Heart left ventricle (tissue), 16 donors: ENCODE measurements at regions of chr19 and their contacts with region 1.

Region 1: DNA sequence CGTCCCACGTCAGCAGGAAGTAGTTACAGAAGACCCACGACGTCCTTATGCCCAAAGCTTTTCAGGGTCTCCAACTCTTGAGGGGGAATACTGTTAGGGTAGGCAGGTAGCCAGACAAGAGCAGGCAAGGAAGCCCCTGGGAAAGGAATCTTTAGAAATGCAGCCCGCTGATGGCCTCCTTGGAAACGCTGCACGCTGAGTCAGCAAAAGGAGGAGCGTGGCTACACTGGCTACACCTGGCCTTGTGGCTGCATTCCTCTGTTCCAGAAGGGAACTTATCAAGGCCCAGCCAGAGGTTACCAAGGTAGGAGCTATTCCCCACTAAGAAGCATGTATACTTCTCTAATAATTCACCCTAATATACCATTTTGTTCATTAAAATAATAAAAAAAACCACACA is 2.0 kb downstream of the ERVV-1 start:
- DNase-seq: no peak
- ATAC-seq: no peak
- H3K4me3 ChIP-seq: no peak overlapping the region
- H3K27ac ChIP-seq: no peak overlapping the region
- H3K4me1 ChIP-seq: no peaks in the 10 kb centered on the region
- H3K27me3 ChIP-seq: peaks cover 0 to 12% (median 0%) of the 10 kb centered on the region in 9 donors
- CTCF ChIP-seq: no peak
- POLR2A ChIP-seq: no peak

Region 2: DNA sequence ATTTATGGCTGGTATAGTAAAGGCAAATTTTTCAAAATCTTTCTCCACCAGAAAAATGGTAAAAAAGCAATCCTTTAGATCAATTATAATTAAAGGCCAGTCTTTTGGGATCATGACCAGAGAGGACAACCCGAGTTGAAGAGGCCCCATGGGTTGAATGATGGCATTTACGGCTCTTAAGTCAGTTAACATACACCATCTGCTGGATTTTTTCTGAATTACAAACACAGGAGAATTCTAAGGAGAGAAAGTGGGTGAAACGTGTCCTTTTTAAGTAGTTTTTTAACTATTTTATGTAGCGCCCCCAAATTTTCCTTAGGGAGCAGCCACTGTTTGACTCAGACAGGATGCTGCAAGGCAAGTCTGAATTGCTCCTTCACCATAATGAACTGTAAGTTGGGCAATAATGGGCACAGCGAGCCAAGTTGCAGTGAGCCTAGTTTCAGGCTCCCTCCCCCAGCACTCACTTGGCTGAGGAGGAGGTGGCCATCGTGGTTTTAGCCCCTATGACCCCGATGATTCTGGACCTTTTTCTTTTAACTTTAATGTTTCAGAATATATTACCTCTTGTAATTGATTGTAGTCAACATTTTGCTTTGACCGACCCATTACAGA is 267.3 kb before region 1 on chr19:
- intact Hi-C with region 1: no loop called
- DNase-seq: no peak
- ATAC-seq: peak in 2 of 4 donors; percentile 46 to 56
- H3K4me3 ChIP-seq: peak overlapping the region in 1 of 12 donors; percentile 19
- H3K27ac ChIP-seq: no peak overlapping the region
- H3K4me1 ChIP-seq: peaks cover 0 to 4% (median 0%) of the 10 kb centered on the region in 12 donors
- H3K27me3 ChIP-seq: no peaks in the 10 kb centered on the region
- CTCF ChIP-seq: peak; percentile 23 to 67 (median 46)
- POLR2A ChIP-seq: no peak

Region 3: GRCh38 chr19:52897144-52897935 is 118.4 kb before region 1 on chr19 and contains the start of gene ZNF320:
- intact Hi-C with region 1: no loop called
- DNase-seq: peak; percentile 97 to 98 (median 98)
- ATAC-seq: peak; percentile 100
- H3K4me3 ChIP-seq: peak within 1 kb of the TSS; percentile 66 to 96 (median 86)
- H3K27ac ChIP-seq: peak within 1 kb of the TSS; percentile 80 to 98 (median 93)
- H3K4me1 ChIP-seq: peaks cover 0 to 20% (median 11%) of the 10 kb centered on the region in 12 donors
- H3K27me3 ChIP-seq: no peaks in the 10 kb centered on the region
- CTCF ChIP-seq: no peak
- POLR2A ChIP-seq: peak in 1 of 2 donors; percentile 81
- total RNA-seq, gene ZNF320: 7.6 to 13.5 (median 9.6) TPM

Region 4: GRCh38 chr19:53045546-53045945 is 29.8 kb after region 1 on chr19:
- intact Hi-C with region 1: loop called in 1 of 10 experiments (anchors 2 kb)
- DNase-seq: no peak
- ATAC-seq: no peak
- H3K4me3 ChIP-seq: no peak overlapping the region
- H3K27ac ChIP-seq: no peak overlapping the region
- H3K4me1 ChIP-seq: no peaks in the 10 kb centered on the region
- H3K27me3 ChIP-seq: peaks cover 0 to 18% (median 0%) of the 10 kb centered on the region in 9 donors
- CTCF ChIP-seq: no peak
- POLR2A ChIP-seq: no peak